Activated CD4-positive, alpha-beta memory T cell treated with anti-CD3 and anti-CD28 coated beads, Interleukin-2, amount 10 ng/mL, durations not matched to agents 7 days and 5 days (primary cell): ENCODE measurements at regions of chr11 and their contacts with region 1.

Region 1: DNA sequence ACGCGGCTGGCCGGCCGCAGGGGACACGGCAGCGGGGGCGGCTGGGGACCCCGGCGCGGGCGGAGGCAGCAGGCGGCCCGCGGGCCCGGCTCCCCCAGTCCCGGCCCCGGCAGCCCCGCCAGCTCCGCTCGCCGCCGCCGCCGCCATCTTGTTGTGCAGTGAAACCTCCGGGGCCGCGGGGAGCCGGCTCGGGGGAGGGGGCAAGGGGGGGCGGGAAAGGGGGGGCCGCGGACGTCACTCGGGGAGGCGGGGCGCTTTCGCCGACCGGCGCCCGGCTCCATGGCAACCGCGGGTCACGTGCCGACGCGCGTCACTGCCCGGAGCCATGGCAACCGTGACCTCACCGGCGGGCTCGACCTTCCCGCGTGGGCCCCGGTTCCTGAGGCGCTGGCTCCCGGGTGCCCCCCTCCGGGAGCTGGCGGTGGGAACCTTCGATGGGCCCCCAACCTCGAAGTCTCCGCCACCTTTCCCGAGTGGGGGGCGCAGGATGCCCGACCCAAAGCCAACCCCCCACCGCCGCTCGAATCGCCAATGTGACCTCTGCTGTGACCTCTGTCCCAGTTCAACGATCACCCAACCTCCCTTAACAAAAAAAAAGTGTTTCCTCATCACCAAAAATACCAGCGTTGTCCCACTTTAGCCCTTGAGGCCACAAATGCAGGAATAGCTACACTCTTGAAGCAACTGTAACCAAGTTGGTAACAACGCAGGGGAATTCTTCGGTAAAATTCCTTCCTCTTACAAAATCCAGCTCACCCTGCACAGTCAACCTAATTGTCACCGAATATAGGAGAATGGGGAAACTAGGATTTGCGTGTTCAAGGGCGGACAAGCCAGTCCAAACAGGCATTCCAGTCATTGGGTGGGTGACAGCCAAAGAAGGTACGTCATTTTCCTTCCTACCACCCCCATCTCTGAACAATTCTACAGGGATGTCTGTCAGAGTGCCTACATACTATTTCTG is at the start of gene SIK3:
- DNase-seq: peak; percentile 93
- H3K4me3 Mint-ChIP-seq: peak within 1 kb of the TSS; percentile 90
- H3K27ac Mint-ChIP-seq: peak within 1 kb of the TSS; percentile 84
- H3K4me1 Mint-ChIP-seq: peaks cover 61% of the 10 kb centered on the region
- H3K27me3 Mint-ChIP-seq: no peaks in the 10 kb centered on the region
- total RNA-seq, gene SIK3: 36.4 to 43.0 TPM

Region 2: GRCh38 chr11:116787786-116788486 is 310.6 kb before region 1 on chr11 and contains the start of gene ZPR1:
- CTCF ChIA-PET with region 1: interaction called, 84 read pairs
- POLR2A ChIA-PET with region 1: interaction called, 8 read pairs
- DNase-seq: peak; percentile 89
- H3K4me3 Mint-ChIP-seq: peak within 1 kb of the TSS; percentile 91
- H3K27ac Mint-ChIP-seq: peak within 1 kb of the TSS; percentile 82
- H3K4me1 Mint-ChIP-seq: peaks cover 52% of the 10 kb centered on the region
- H3K27me3 Mint-ChIP-seq: peaks cover 9% of the 10 kb centered on the region
- total RNA-seq, gene ZPR1: 55.6 to 57.6 TPM

Region 3: DNA sequence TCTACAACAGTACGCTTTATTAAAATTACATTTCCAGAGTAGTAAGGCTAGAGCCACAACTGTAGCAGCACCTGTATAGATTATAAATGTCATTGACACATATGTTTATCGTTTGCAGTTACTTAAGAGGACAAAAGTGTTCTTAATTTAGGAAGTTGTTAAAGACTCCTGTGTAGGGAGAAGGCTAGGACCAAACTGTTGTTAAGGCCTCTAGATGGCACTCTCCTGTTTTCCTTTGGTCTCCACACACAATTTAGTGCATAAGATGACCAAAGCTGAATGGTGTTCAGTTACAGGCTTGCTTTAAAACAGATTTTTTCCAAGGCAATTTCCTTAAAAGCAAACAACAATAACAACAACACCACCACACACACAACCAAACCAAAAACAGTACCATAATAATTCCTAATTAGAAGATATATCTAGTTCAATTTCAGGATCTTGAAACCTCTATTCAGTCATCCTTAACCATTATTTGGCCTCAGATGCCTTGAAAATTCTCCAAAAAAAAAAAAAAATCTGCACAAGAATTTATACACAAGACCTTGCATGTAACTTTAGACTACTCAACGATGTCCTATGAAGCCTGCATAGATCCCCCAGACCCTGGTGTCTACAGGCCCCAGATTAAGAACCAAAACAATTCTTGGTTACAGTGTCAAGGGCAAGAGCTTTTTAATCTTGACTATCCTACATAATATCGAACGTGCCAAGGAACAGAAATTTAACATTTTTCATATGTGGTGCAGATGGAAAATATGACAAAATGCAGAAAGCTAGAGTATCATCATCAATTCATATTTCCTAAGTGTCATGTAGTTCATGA is 218.5 kb before region 1 on chr11:
- CTCF ChIA-PET with region 1: interaction called, 37 read pairs
- POLR2A ChIA-PET with region 1: no interaction called
- DNase-seq: no peak
- H3K4me3 Mint-ChIP-seq: no peak overlapping the region
- H3K27ac Mint-ChIP-seq: peak overlapping the region; percentile 6
- H3K4me1 Mint-ChIP-seq: peaks cover 17% of the 10 kb centered on the region
- H3K27me3 Mint-ChIP-seq: no peaks in the 10 kb centered on the region

Region 4: GRCh38 chr11:117072517-117073461 is 25.8 kb before region 1 on chr11:
- CTCF ChIA-PET with region 1: interaction called, 8 read pairs
- POLR2A ChIA-PET with region 1: interaction called, 10 read pairs
- DNase-seq: no peak
- H3K4me3 Mint-ChIP-seq: no peak overlapping the region
- H3K27ac Mint-ChIP-seq: no peak overlapping the region
- H3K4me1 Mint-ChIP-seq: peaks cover 48% of the 10 kb centered on the region
- H3K27me3 Mint-ChIP-seq: no peaks in the 10 kb centered on the region